Mammary epithelial cell (primary cell): ENCODE measurements at regions of chr6 and their contacts with region 1.

Region 1: GRCh38 chr6:40661726-40662125 is 74.6 kb upstream of the LRFN2 start:
- DNase-seq: no peak
- H3K4me3 ChIP-seq: no peak overlapping the region
- H3K27ac ChIP-seq: no peak overlapping the region
- H3K4me1 ChIP-seq: no peaks in the 10 kb centered on the region
- H3K27me3 ChIP-seq: peaks cover 2% of the 10 kb centered on the region
- CTCF ChIP-seq: no peak

Region 2: DNA sequence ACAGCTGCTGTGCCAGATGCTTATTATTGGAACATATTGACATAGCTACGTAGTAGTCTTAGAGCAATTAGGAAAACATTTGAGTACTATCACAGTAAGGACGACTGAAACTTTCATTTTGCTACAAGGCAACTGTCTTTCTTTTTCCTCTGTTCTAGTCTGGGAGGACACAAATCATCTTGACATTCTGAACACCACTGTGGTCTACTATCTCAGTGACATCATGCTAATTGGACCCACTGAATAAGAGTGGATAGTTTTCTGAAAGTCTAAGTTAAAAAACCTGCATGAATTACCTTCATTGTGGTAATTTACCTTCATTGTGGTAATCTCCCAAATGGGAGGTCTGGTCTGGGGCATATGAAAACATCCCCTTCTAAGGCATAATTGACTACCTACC is 564.1 kb before region 1 on chr6:
- CTCF ChIA-PET with region 1: no interaction called
- dilution Hi-C with region 1: no loop called
- in situ Hi-C with region 1: no loop called
- intact Hi-C with region 1: no loop called
- DNase-seq: no peak
- H3K4me3 ChIP-seq: no peak overlapping the region
- H3K27ac ChIP-seq: no peak overlapping the region
- H3K4me1 ChIP-seq: peaks cover 2% of the 10 kb centered on the region
- H3K27me3 ChIP-seq: no peaks in the 10 kb centered on the region
- CTCF ChIP-seq: no peak

Region 3: GRCh38 chr6:40627316-40627715 is 34.4 kb before region 1 on chr6:
- CTCF ChIA-PET with region 1: no interaction called
- dilution Hi-C with region 1: loop called (anchors 5 kb)
- in situ Hi-C with region 1: no loop called
- intact Hi-C with region 1: no loop called
- DNase-seq: peak; percentile 43
- H3K4me3 ChIP-seq: no peak overlapping the region
- H3K27ac ChIP-seq: no peak overlapping the region
- H3K4me1 ChIP-seq: no peaks in the 10 kb centered on the region
- H3K27me3 ChIP-seq: no peaks in the 10 kb centered on the region
- CTCF ChIP-seq: no peak

Region 4: GRCh38 chr6:40733290-40733689 is 71.6 kb after region 1 on chr6:
- CTCF ChIA-PET with region 1: no interaction called
- dilution Hi-C with region 1: no loop called
- in situ Hi-C with region 1: no loop called
- intact Hi-C with region 1: no loop called
- DNase-seq: no peak
- H3K4me3 ChIP-seq: no peak overlapping the region
- H3K27ac ChIP-seq: no peak overlapping the region
- H3K4me1 ChIP-seq: no peaks in the 10 kb centered on the region
- H3K27me3 ChIP-seq: peaks cover 5% of the 10 kb centered on the region
- CTCF ChIP-seq: no peak